ENCODE measurements at regions of chr7 and their contacts with region 1.

Region 1: DNA sequence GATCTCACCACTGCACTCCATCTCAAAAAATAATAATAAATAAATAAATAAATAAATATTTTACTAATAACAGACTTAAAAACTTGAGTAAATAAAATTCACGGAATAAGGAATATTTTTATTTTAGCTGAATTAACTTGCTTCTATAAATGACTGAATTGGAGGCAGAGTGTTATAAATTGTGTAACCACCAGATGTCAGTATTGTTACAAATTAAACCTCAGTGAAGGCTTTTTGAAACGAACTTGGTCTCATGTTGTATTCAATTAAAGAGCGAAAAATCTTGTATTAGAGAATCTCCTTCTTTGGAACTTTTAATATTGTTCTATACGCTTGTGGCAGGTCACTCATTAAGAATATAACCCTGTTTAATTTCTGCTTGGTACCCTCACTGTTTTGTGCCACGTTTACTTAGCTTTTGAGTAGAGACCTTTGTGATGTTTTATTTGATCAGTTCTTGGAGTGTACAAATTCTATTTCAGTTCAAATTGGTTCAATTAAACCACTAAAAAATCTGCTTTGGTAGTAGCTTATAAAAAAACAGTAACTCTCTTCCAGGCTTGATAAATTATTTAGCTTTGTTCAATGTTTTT is 45.6 kb upstream of the SCIN start:
- ATAC-seq: peak in 2 of 8 experiments; percentile 47 to 55
- H3K4me3 ChIP-seq: no peak overlapping the region
- H3K27ac ChIP-seq: no peak overlapping the region
- H3K4me1 ChIP-seq: no peaks in the 10 kb centered on the region

Region 2: DNA sequence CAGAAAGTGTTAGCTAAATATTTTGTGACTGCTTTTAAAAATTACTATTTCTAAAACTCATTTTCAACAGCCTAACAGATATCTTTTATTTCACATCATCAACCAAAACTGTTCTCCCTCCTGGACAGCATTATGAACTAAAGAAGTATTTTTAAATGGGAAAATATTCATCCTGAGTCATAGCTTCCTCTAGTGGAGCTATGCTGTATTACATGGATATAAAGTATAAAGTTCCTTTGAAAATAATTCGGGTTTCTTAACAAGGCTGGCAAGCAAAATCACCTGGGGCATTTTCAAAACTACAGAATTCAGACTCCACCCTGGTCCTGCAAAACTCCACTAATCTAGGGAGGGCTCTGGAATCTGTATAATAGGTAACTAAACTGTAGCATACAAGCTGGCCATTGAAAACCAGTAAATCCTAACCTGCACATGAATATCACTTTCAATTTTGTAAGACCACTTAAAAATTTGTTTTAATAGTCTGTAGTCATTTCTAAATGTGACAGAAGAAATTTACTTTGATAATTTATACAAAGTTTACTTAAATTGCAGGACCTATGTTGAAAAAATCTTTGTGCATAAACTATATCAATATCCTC is 99.1 kb after region 1 on chr7:
- in situ Hi-C with region 1: loop called in 3 of 9 experiments (anchors 10 to 25 kb)
- ATAC-seq: peak in 3 of 8 experiments; percentile 45 to 68 (median 50)
- H3K4me3 ChIP-seq: no peak overlapping the region
- H3K27ac ChIP-seq: no peak overlapping the region
- H3K4me1 ChIP-seq: no peaks in the 10 kb centered on the region

Region 3: DNA sequence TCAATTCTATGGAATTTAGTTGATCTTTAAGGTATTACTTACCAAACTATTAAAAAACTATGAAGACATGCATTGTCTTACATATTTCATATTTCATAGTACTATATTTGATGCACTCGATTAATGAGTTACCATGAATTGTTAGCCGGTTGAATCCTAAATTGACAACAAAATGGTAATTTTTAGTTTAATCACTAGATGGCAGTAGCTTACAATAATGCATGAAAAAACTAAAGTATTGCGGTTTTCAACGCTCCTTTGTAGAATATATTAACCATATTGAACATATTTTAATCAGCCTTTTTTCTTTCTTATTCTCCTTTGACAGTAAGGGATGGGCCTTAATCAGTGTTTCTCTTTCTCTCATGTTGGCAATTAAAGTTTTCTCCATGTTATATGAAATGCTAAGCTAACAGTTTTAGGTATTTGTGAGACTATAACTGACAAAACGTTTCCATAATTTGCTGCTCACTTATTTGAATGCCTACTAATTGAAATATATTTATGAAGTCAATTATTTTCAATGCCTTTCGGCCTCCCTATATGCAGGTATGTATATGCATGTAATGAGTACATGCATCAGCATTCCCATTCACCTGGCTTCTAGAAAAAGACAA is 114.1 kb after region 1 on chr7:
- in situ Hi-C with region 1: loop called in 1 of 9 experiments (anchors 25 kb)
- ATAC-seq: peak in 1 of 8 experiments; percentile 39
- H3K4me3 ChIP-seq: no peak overlapping the region
- H3K27ac ChIP-seq: no peak overlapping the region
- H3K4me1 ChIP-seq: no peaks in the 10 kb centered on the region

Measured in motor neuron (in vitro differentiated cells).